MCF 10A (cell line): ENCODE measurements at regions of chr11 and their contacts with region 1.

Region 1: DNA sequence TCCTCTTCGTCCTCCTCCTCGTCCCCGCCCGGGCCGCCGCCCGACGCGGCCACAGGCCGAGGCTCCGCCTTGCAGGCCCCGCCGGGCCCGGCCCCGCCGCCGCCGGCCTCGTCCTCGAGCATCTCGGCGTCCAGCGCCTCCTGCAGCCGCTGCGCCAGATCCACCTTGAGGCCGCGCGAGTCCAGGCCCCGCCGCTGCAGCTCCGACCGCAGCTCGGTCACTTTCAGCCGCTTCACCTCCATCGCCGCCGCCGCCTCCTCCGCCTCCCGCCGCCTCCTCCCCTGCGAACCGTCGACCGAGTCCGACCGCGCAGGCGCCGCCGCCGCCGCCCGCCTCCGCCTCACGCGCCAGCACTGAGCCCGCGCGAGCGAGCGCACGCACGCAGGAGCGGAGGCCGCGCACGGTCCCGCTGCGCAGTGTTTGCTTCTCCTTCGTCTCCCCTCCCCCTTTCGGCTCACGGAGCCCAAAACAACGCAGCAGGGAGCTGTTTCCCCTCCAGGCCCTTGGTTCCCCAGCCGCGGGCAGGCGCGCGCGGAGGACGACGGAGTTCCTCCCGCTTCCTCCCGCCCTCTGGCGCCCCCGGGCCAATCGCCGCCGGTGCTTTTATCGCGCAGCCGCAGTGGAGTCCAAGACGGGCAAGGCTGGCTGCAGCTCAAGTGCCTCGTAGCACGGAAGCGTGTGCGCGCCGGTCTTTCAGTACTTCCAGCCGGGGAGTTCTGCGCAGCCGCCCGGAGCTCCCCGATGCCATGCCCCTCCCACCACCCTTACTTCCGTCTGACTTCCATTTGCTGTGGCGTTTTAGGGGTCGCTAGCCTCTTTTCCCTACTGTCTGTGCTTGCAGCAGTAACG is at the start of gene HNRNPUL2:
- DNase-seq: peak; percentile 97
- H3K4me3 Mint-ChIP-seq: peak within 1 kb of the TSS; percentile 92
- H3K27ac Mint-ChIP-seq: peak within 1 kb of the TSS; percentile 97
- H3K4me1 Mint-ChIP-seq: peaks cover 16% of the 10 kb centered on the region
- H3K27me3 Mint-ChIP-seq: no peaks in the 10 kb centered on the region
- CTCF ChIP-seq: no peak
- total RNA-seq, gene HNRNPUL2: 36.4 and 36.6 TPM in 2 replicates

Region 2: GRCh38 chr11:62458212-62459002 is 268.7 kb before region 1 on chr11:
- CTCF ChIA-PET with region 1: no interaction called
- POLR2A ChIA-PET with region 1: no interaction called
- intact Hi-C with region 1: no loop called
- DNase-seq: no peak
- H3K4me3 Mint-ChIP-seq: no peak overlapping the region
- H3K27ac Mint-ChIP-seq: no peak overlapping the region
- H3K4me1 Mint-ChIP-seq: no peaks in the 10 kb centered on the region
- H3K27me3 Mint-ChIP-seq: no peaks in the 10 kb centered on the region
- CTCF ChIP-seq: no peak

Region 3: DNA sequence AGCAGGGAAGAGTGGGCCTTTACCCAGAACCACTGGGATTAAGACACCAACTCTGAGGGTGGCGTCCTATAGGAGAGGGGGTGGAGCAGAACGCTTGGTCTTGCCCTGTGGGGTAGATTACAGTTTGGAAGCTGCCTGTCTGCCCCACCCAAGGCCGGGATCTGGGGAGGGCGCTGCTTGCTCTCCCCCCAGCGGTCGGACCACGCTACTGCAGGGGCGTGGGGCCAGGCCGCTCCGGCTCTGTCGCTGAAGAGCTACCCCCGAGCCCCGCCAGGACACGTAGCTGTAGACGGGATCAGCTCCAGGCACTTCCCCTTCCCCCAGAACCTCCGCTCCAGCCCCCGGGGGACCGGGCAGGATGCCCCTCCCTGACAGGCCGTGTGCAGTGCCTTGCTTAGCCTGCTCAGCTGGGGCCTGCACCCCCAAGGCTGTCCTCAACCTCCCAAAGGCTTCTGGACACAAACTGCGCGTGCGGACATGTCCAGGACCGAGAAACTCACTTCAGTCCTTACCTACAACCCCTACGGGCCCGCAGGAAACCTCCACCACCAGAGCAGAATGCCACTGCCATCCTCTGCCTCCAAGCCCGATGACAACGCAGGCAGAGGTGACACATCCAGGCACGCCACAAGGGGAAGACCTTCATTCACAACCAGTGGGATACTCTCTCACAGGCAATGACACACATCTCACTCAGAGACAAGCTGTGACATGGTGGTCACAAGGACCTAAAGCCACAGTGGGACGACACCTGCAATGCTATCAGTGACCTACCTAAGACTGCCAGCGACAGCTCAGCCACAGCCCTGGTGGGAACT is 184.2 kb before region 1 on chr11:
- CTCF ChIA-PET with region 1: no interaction called
- POLR2A ChIA-PET with region 1: interaction called, 13 read pairs
- intact Hi-C with region 1: no loop called
- DNase-seq: peak; percentile 82
- H3K4me3 Mint-ChIP-seq: peak overlapping the region; percentile 99
- H3K27ac Mint-ChIP-seq: peak overlapping the region; percentile 69
- H3K4me1 Mint-ChIP-seq: peaks cover 44% of the 10 kb centered on the region
- H3K27me3 Mint-ChIP-seq: no peaks in the 10 kb centered on the region
- CTCF ChIP-seq: peak; percentile 99

Region 4: DNA sequence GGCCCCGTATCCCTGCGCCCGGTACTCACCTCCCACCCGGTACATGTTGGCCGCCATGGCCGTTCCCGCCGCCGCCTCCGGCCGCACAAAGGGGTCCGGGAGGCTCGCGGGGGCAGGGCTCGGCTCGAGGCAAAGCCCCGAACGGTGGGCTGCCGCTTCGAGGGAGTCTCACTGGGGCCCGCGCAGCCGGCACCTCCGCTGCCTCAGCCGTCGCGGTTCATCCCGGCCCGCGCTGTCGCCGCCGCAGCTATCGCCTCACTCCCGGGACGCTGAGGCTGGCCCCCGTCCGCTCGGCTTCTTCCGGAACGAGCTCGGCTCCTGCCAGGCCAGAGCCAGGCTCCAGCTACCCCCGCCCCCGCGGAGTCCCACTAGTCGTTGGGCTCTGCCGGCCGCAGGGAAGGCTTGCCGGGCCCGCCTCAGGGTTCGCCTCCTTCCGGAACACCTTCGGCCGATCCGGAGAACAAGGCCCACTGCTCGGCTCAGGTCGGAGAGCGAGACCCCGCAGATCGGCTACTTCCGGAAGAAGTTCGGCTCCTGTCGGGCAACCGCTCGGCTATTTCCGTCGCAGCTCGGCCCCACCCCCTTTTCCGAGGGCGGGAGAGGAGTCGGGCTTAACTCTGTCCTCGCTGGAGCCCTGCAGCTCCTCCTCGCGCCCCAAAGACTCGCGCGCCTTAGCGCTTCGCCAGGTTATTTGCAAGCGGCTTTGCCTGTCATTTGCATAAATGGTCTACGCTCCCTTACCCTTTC is 125.6 kb before region 1 on chr11 and contains the start of gene MTA2:
- CTCF ChIA-PET with region 1: interaction called, 3 read pairs
- POLR2A ChIA-PET with region 1: interaction called, 40 read pairs
- intact Hi-C with region 1: no loop called
- DNase-seq: peak; percentile 98
- H3K4me3 Mint-ChIP-seq: peak within 1 kb of the TSS; percentile 86
- H3K27ac Mint-ChIP-seq: peak within 1 kb of the TSS; percentile 96
- H3K4me1 Mint-ChIP-seq: peaks cover 38% of the 10 kb centered on the region
- H3K27me3 Mint-ChIP-seq: no peaks in the 10 kb centered on the region
- CTCF ChIP-seq: no peak
- total RNA-seq, gene MTA2: 139 and 176 TPM in 2 replicates

Region 5: DNA sequence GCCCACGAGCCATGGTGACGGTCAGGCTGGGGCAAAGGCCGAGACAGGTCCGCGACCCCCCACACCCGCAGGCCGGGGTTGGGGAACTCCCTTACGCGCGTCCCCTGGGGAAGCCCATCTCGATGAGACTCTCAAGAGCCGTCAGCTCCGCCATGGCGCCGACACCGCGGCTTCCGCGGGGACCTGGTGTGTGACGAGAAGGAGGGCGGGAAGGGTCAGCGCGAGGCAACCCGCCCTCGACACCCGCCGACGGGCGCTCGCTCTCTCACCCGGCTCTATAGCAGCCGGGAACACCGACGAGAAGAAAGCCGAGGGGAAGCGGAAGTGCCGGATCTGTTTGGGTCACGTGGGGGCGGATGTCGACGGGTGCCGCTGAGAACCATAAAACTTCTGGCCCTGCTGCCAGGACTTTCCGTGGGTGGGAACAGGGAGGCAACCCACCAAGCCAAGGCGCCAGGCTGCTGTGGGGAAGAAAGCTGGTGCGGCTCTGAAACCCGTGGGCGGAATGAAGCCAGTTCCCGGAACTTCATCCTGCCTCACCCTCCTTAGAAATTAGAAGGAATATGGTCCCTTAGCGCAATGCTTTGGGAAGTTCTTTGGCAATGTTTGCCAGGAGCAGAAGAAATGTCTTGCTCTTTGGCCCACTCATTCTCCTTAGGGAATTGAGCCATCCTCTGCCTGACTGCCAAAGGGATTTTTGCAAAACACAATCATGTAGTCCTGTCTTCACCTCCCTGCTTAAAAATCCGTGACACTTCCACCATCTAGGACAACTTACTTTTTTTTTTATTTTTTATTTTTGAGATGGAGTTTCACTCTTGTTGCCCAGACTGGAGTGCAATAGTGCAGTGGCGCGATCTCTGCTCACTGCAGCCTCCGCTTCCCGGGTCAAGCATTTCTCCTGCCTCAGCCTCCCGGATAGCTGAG is 48.1 kb before region 1 on chr11 and contains the start of gene UBXN1:
- CTCF ChIA-PET with region 1: interaction called, 22 read pairs
- POLR2A ChIA-PET with region 1: interaction called, 53 read pairs
- intact Hi-C with region 1: no loop called
- DNase-seq: peak; percentile 89
- H3K4me3 Mint-ChIP-seq: peak within 1 kb of the TSS; percentile 72
- H3K27ac Mint-ChIP-seq: peak within 1 kb of the TSS; percentile 94
- H3K4me1 Mint-ChIP-seq: peaks cover 22% of the 10 kb centered on the region
- H3K27me3 Mint-ChIP-seq: no peaks in the 10 kb centered on the region
- CTCF ChIP-seq: no peak
- total RNA-seq, gene UBXN1: 146 and 153 TPM in 2 replicates

Region 6: DNA sequence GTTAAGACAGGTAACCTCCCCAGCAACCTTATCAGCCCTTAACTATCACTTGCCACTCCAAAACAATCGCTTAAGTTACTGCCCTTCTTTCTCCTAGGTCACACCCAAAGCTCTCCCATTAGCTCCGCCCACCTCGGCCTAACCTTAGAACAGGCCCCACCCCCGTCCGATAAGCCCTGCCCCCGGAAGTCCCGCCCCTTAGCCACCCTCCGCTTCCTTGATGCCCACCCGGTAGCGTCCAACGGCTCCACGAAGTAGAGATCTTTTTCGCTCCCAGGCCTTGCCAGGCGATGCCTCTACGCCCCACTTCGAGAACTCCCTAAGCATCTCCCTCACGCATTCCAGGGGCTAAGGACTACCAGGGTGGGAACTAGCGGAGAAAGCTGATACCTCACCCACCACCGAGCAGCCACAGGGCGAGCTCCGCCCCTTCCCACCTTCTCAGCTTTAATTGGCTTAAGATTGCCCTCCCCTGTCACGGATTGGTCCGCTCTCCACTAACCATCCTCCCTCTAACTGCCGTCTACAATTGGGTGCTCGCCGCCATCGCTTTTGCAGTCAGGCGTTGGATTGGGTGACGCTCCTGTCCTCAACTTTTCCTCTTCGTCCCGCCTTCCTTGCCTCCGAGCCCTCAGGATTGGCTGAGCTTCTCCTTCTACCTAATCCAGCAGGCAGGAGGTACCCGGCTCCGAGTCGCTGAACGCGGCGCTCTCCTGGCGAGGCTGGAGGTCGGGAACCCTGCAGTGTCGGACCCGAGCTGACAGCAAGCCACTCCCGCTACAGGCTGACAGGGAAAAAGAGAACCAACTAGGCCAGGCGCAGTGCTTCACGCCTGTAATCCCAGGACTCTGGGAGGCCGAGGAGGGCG is 26.8 kb after region 1 on chr11 and contains the start of gene ZBTB3:
- CTCF ChIA-PET with region 1: interaction called, 7 read pairs
- POLR2A ChIA-PET with region 1: interaction called, 127 read pairs
- intact Hi-C with region 1: no loop called
- DNase-seq: peak; percentile 100
- H3K4me3 Mint-ChIP-seq: peak within 1 kb of the TSS; percentile 98
- H3K27ac Mint-ChIP-seq: peak within 1 kb of the TSS; percentile 96
- H3K4me1 Mint-ChIP-seq: peaks cover 3% of the 10 kb centered on the region
- H3K27me3 Mint-ChIP-seq: no peaks in the 10 kb centered on the region
- CTCF ChIP-seq: no peak
- total RNA-seq, gene ZBTB3: 7.1 and 11.6 TPM in 2 replicates

Region 7: GRCh38 chr11:62805076-62805892 is 78.1 kb after region 1 on chr11 and contains the start of gene NXF1:
- CTCF ChIA-PET with region 1: interaction called, 3 read pairs
- POLR2A ChIA-PET with region 1: interaction called, 21 read pairs
- intact Hi-C with region 1: no loop called
- DNase-seq: peak; percentile 93
- H3K4me3 Mint-ChIP-seq: peak within 1 kb of the TSS; percentile 95
- H3K27ac Mint-ChIP-seq: peak within 1 kb of the TSS; percentile 99
- H3K4me1 Mint-ChIP-seq: peaks cover 20% of the 10 kb centered on the region
- H3K27me3 Mint-ChIP-seq: no peaks in the 10 kb centered on the region
- CTCF ChIP-seq: no peak
- total RNA-seq, gene NXF1: 47.6 and 53.3 TPM in 2 replicates

Region 8: GRCh38 chr11:62855571-62856332 is 128.6 kb after region 1 on chr11:
- CTCF ChIA-PET with region 1: interaction called, 3 read pairs
- POLR2A ChIA-PET with region 1: interaction called, 138 read pairs
- intact Hi-C with region 1: no loop called
- DNase-seq: peak; percentile 98
- H3K4me3 Mint-ChIP-seq: peak overlapping the region; percentile 94
- H3K27ac Mint-ChIP-seq: peak overlapping the region; percentile 64
- H3K4me1 Mint-ChIP-seq: peaks cover 35% of the 10 kb centered on the region
- H3K27me3 Mint-ChIP-seq: no peaks in the 10 kb centered on the region
- CTCF ChIP-seq: no peak